PC-9 (cell line): ENCODE measurements at regions of chr17 and their contacts with region 1.

Region 1: DNA sequence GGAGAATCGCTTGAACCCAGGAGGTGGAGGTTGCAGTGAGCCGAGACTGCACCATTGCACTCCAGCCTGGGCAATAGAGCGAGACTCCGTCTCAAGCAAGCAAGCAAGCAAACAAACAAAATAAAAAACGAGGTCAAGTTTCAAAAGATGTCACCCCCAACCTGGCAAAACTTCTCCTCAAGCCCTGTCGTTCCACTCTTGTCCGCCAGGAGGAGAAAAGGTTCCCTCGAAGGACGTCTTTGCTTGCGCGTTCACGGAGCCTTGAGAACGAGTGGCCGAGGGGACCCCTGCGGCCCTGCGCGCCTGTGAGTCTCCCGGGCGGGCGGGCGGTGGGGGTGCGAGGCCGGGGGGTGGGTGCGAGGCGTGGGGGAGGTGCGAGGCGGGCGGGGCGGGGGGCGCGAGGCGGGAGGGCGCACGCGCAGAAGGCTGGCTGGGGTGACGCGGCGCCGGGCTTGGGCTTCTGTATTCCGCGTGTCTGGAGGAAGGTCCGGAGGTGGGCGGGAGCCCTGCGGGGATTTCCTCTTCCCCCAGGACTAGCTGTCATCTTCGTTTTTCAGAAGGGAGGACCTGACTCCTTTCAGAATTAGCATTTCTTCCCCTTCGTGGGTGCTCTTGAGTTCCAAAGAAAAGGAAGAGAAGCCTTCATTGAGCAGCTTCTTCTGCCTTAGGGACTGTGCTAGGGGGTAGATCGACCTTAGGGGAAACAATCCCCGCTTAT is 3.7 kb downstream of the SLC52A1 start:
- DNase-seq: peak; percentile 71 to 81
- H3K4me3 ChIP-seq: peak overlapping the region; percentile 56; the same call in 1 of the 2 replicates
- H3K27ac ChIP-seq: no peak overlapping the region
- H3K4me1 ChIP-seq: 0 out of 2 replicates have a peak, but pooled peaks cover 3% of the 10 kb centered on the region
- H3K27me3 ChIP-seq: peaks cover 3% of the 10 kb centered on the region; the same call in 1 of the 2 replicates
- CTCF ChIP-seq: peak; percentile 86

Region 2: GRCh38 chr17:4928881-4929280 is 102.6 kb before region 1 on chr17:
- CTCF ChIA-PET with region 1: interaction called, 18 read pairs
- POLR2A ChIA-PET with region 1: no interaction called
- intact Hi-C with region 1: no loop called
- DNase-seq: no peak
- H3K4me3 ChIP-seq: no peak overlapping the region
- H3K27ac ChIP-seq: no peak overlapping the region
- H3K4me1 ChIP-seq: peaks cover 1% of the 10 kb centered on the region
- H3K27me3 ChIP-seq: no peaks in the 10 kb centered on the region
- CTCF ChIP-seq: no peak

Region 3: GRCh38 chr17:5049314-5049895 is 17.9 kb after region 1 on chr17:
- CTCF ChIA-PET with region 1: interaction called, 5 read pairs
- POLR2A ChIA-PET with region 1: interaction called, 32 read pairs
- intact Hi-C with region 1: no loop called
- DNase-seq: no peak
- H3K4me3 ChIP-seq: no peak overlapping the region
- H3K27ac ChIP-seq: no peak overlapping the region
- H3K4me1 ChIP-seq: peaks cover 10% of the 10 kb centered on the region
- H3K27me3 ChIP-seq: no peaks in the 10 kb centered on the region
- CTCF ChIP-seq: no peak